Stomach (tissue), 19 donors: ENCODE measurements at regions of chr9 and their contacts with region 1.

Region 1: GRCh38 chr9:4984621-4985385 is at the start of gene JAK2:
- DNase-seq: peak; percentile 90 to 96
- H3K4me3 ChIP-seq: peak within 1 kb of the TSS; percentile 73 to 92 (median 86)
- H3K27ac ChIP-seq: peak within 1 kb of the TSS; percentile 97 to 99 (median 98)
- H3K4me1 ChIP-seq: peaks cover 29 to 57% (median 46%) of the 10 kb centered on the region in 4 donors
- H3K27me3 ChIP-seq: no peaks in the 10 kb centered on the region
- CTCF ChIP-seq: peak in 4 of 7 experiments; percentile 9 to 28 (median 18)
- EP300 ChIP-seq: no peak
- POLR2A ChIP-seq: peak in 2 of 4 donors; percentile 41 to 58
- total RNA-seq, gene JAK2: 12.7 to 58.6 (median 45.1) TPM

Region 2: DNA sequence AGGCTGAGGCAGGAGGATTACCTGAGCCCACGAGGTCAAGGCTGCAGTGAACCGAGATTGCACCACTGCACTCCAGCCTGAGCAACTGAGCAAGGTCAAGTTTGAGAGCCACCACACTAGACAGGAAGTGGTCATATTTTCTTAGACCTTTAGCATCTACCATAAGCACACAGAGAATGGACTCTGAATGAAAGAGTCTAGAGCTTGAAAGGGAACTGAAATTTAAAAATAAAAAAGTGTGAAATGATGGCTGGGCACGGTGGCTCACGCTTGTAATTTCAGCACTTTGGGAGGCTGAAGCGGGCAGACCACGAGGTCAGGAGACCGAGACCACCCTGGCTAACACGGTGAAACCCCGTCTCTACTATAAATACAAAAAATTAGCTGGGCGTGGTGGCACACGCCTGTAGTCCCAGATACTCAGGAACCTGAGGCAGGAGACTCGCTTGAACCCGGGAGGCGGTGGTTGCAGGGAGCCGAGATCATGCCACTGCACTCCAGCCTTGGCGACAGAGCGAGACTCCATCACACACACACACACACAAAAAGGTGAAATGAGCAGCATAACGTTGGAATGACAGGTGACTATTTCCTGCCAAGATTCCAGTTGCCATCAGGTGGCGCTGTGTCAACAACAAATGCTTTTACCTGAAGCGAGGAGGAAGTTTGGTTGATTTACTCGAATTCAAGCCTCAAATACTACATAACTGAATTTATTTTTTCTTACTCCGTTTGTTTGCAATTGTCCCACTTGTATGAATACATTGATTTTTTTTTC is 222.5 kb before region 1 on chr9:
- intact Hi-C with region 1: loop called (anchors 10 kb)
- DNase-seq: peak; percentile 88 to 92
- H3K4me3 ChIP-seq: peak overlapping the region; percentile 2 to 31 (median 10)
- H3K27ac ChIP-seq: peak overlapping the region in 3 of 5 donors; percentile 47 to 73 (median 61)
- H3K4me1 ChIP-seq: peaks cover 4 to 40% (median 18%) of the 10 kb centered on the region in 4 donors
- H3K27me3 ChIP-seq: no peaks in the 10 kb centered on the region
- CTCF ChIP-seq: peak in 5 of 7 experiments; percentile 70 to 85 (median 79)
- EP300 ChIP-seq: no peak
- POLR2A ChIP-seq: no peak

Region 3: DNA sequence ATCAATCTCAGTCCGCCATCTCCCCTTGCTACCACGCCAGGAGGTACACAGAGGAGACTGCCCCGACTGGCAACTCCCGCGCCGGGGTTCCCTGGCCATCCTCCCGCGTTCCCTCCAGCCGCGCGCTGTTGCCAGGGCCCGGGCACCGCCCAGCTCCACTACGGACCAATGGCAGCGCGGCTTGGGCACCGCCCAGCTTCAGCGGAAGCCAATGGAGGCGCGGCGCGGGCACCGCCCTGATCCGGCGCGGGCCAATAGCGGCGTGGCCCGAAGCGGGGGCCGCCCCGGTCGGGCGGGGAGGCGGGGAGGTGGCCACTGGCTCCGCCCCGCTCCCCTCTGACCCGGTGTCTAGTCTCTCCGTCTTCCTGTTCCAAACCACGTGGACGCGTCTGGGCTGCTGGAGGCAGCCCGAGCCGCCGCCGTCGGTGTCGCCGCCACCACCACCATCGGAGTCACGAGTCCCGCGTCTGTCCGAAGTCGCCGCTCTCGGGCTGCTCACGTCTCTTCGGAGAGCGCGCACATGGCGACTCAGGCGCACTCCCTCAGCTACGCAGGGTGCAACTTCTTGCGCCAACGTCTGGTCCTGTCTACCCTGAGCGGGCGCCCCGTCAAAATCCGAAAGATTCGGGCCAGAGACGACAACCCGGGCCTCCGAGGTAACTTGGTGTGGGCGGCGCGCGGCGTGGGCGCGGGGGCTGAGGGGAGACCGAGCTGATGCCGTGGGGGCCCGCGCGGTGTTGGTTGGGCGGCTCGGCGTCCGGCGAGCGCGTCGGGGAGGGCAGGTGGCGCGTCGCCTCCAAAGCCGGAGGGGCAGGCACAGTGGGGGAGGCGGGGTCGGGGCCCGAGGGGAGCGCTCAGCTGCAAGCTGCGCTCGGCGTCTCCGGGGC is 192.0 kb before region 1 on chr9 and contains the start of gene RCL1:
- intact Hi-C with region 1: loop called (anchors 10 kb)
- DNase-seq: peak; percentile 97 to 99
- H3K4me3 ChIP-seq: peak within 1 kb of the TSS; percentile 73 to 96 (median 84)
- H3K27ac ChIP-seq: peak within 1 kb of the TSS; percentile 82 to 88 (median 86)
- H3K4me1 ChIP-seq: peaks cover 18 to 42% (median 37%) of the 10 kb centered on the region in 4 donors
- H3K27me3 ChIP-seq: no peaks in the 10 kb centered on the region
- CTCF ChIP-seq: no peak
- EP300 ChIP-seq: no peak
- POLR2A ChIP-seq: peak in 1 of 4 donors; percentile 65
- total RNA-seq, gene RCL1: 11.7 to 38.7 (median 14.7) TPM

Region 4: GRCh38 chr9:4862506-4863250 is 122.1 kb before region 1 on chr9:
- intact Hi-C with region 1: no loop called
- DNase-seq: no peak
- H3K4me3 ChIP-seq: no peak overlapping the region
- H3K27ac ChIP-seq: no peak overlapping the region
- H3K4me1 ChIP-seq: peaks cover 0 to 6% (median 0%) of the 10 kb centered on the region in 4 donors
- H3K27me3 ChIP-seq: no peaks in the 10 kb centered on the region
- CTCF ChIP-seq: no peak
- EP300 ChIP-seq: no peak
- POLR2A ChIP-seq: no peak

Region 5: GRCh38 chr9:5073701-5074100 is 88.9 kb after region 1 on chr9:
- intact Hi-C with region 1: no loop called
- DNase-seq: no peak
- H3K4me3 ChIP-seq: no peak overlapping the region
- H3K27ac ChIP-seq: no peak overlapping the region
- H3K4me1 ChIP-seq: no peaks in the 10 kb centered on the region
- H3K27me3 ChIP-seq: no peaks in the 10 kb centered on the region
- CTCF ChIP-seq: no peak
- EP300 ChIP-seq: no peak
- POLR2A ChIP-seq: no peak

Region 6: GRCh38 chr9:5529683-5530221 is 544.9 kb after region 1 on chr9:
- intact Hi-C with region 1: no loop called
- DNase-seq: no peak
- H3K4me3 ChIP-seq: no peak overlapping the region
- H3K27ac ChIP-seq: no peak overlapping the region
- H3K4me1 ChIP-seq: peaks cover 0 to 8% (median 3%) of the 10 kb centered on the region in 4 donors
- H3K27me3 ChIP-seq: no peaks in the 10 kb centered on the region
- CTCF ChIP-seq: no peak
- EP300 ChIP-seq: no peak
- POLR2A ChIP-seq: no peak

Region 7: DNA sequence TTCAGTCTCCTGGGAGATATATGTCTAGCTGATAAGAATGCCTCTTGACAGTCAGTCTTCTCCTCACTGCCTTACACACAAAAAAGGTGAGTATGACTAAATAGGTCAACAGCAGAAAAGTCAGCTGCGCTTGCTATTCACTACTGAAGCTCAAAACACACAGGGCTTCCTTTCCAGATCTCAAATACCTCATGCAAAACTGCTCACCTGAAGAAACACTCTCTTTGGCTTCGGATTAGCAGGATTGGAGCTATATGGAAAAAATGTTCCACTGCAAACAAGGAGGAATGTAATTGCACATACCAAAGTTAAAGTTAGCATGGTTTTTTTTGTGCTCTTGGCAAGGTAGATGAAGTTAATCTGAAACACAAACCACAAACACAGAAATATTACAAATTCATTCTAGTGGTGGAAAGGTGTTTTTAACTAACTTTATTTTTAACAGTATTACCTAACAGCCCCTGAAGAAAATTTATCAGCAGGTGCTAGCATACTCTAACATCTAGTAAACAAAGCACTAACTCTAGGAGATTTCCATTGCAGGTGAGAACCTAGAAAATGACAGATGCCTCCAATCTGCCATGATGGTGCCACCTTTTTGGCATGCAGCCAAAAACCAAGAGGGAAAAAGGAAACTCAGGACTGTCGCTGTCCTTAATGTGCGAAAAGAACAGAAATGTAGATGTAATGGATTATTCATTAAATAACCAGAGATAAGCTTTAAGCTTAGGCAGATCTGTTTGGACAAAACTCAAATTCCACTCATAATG is 816.4 kb after region 1 on chr9:
- intact Hi-C with region 1: no loop called
- DNase-seq: peak in 1 of 2 donors; percentile 30
- H3K4me3 ChIP-seq: no peak overlapping the region
- H3K27ac ChIP-seq: no peak overlapping the region
- H3K4me1 ChIP-seq: peaks cover 12 to 25% (median 16%) of the 10 kb centered on the region in 4 donors
- H3K27me3 ChIP-seq: no peaks in the 10 kb centered on the region
- CTCF ChIP-seq: no peak
- EP300 ChIP-seq: no peak
- POLR2A ChIP-seq: no peak